ENCODE measurements at regions of chr17 and their contacts with region 1.

Region 1: DNA sequence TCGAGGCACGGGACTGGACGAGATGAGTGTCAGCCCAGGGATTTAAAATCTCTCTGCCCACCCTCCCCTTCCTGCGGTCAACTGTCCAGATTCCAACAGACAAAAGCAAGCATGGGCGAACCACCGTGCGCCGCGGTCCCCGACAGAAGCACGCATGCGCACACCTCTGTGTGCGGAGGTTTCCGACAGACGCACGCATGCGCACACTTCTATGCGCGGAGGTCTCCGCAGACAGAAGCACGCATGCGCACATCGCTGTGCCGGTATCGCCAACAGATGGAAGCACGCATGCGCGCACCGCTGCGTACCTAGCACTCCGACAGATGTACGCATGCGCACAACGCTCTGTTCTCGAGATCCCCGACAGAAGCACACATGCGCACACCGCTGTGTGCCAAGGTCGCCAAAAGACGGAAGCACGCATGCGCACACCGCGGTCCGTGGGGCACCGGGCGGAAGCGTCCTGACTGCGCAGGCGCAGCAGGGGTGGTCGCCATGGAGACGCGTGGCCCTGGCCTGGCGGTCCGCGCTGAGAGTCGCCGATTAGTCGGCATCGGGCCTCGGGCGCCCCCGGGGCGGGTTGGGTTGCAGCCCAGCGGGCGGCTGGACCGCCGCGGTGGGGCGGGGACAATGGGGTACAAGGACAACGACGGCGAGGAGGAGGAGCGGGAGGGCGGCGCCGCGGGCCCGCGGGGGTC is 57.4 kb upstream of the RPH3AL start:
- DNase-seq: peak; percentile 98
- H3K4me3 ChIP-seq: peak overlapping the region; percentile 82
- H3K27ac ChIP-seq: peak overlapping the region; percentile 75
- H3K27me3 ChIP-seq: no peaks in the 10 kb centered on the region
- CTCF ChIP-seq: no peak

Region 2: DNA sequence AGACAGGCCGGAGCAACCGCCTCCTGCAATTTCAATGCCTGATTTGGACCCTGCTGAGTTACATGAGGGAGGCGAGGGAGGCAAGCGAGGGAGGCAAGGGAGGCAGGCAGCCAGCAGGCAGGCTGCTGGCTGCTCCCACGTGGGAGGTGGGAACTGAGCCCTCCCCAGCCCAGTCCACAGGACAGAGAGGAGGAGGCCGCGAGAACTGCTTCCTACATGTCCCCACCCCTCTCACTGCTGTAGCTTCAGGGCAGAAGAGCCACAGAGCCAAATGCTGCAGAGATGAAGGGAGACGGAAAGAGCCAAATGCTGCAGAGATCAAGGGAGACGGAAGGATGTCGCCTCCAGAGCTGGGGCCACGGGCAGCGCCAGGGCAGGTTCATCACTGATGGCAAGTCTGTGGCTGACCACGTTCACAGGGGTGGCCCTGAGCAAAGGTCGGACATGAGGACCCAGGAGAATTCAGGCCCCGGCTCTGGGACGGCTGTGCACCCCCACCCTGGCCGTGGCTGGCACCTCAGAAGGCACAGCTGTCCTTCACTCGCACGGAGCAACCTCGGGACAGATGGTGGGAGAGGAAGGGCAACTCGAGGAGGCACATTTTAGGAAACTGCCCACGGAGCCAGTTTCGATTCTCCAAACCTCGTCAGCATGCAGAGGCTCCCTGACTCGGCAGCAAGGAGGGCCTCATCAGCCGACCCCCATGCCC is 78.8 kb before region 1 on chr17:
- CTCF ChIA-PET with region 1: no interaction called
- POLR2A ChIA-PET with region 1: no interaction called
- DNase-seq: no peak
- H3K4me3 ChIP-seq: no peak overlapping the region
- H3K27ac ChIP-seq: no peak overlapping the region
- H3K27me3 ChIP-seq: peaks cover 39% of the 10 kb centered on the region
- CTCF ChIP-seq: no peak

Region 3: DNA sequence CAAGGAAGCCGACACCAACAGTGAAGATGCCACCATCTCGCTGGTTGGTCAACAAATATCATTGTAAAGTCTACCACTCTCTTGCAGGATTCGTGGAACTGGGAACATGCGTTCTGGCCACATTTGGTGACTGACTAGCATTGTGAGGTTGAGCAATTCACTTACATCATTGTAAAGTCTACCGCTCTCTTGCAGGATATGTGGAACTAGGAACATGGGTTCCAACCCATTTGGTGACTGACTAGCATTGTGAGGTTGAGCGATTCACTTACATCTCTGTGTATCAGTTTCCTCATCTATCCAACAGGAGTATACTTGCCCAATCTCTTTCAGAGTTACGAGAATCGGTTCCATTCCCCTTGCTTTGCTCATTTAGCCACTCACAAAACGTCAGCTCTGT is 14.8 kb before region 1 on chr17:
- CTCF ChIA-PET with region 1: no interaction called
- POLR2A ChIA-PET with region 1: no interaction called
- DNase-seq: no peak
- H3K4me3 ChIP-seq: no peak overlapping the region
- H3K27ac ChIP-seq: no peak overlapping the region
- H3K27me3 ChIP-seq: peaks cover 7% of the 10 kb centered on the region
- CTCF ChIP-seq: no peak

Region 4: GRCh38 chr17:422196-422930 is 12.4 kb after region 1 on chr17:
- CTCF ChIA-PET with region 1: interaction called, 40 read pairs
- POLR2A ChIA-PET with region 1: no interaction called
- DNase-seq: no peak
- H3K4me3 ChIP-seq: no peak overlapping the region
- H3K27ac ChIP-seq: no peak overlapping the region
- H3K27me3 ChIP-seq: no peaks in the 10 kb centered on the region
- CTCF ChIP-seq: no peak

Region 5: GRCh38 chr17:538181-538973 is 128.4 kb after region 1 on chr17:
- CTCF ChIA-PET with region 1: interaction called, 13 read pairs
- POLR2A ChIA-PET with region 1: no interaction called
- DNase-seq: peak; percentile 34
- H3K4me3 ChIP-seq: no peak overlapping the region
- H3K27ac ChIP-seq: peak overlapping the region; percentile 90
- H3K27me3 ChIP-seq: no peaks in the 10 kb centered on the region
- CTCF ChIP-seq: no peak

Region 6: DNA sequence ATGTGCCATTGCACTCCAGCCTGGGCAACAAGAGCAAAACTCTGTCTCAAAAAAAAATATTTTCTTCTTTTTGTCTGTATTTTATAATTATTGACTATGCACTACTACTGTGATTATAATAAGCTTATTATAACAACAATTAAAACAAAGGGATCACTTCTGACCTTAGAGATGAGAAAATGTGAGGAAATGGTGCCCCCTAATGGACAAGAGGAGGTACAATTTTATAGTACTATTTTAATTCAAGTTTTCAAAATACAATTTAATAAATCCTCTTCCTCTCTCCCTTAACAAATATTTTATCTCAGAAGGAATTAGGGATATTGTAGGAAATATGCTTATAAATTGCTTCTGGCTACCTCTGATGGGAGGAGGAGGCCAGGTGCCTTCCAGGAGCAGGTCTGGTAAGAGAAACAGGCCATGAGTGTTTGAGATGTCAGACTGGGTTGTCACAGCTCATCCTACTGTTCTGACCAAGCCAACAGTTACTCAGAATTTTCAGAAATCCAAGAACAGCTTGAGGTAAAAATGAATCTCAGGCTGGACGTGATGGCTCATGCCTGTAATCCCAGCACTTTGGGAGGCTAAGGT is 290.6 kb after region 1 on chr17:
- CTCF ChIA-PET with region 1: interaction called, 468 read pairs
- POLR2A ChIA-PET with region 1: interaction called, 9 read pairs
- DNase-seq: no peak
- H3K4me3 ChIP-seq: no peak overlapping the region
- H3K27ac ChIP-seq: no peak overlapping the region
- H3K27me3 ChIP-seq: no peaks in the 10 kb centered on the region
- CTCF ChIP-seq: peak; percentile 59

Region 7: GRCh38 chr17:996554-997344 is 586.8 kb after region 1 on chr17 and contains the start of gene TIMM22:
- CTCF ChIA-PET with region 1: interaction called, 16 read pairs
- POLR2A ChIA-PET with region 1: no interaction called
- DNase-seq: peak; percentile 94
- H3K4me3 ChIP-seq: peak within 1 kb of the TSS; percentile 100
- H3K27ac ChIP-seq: peak within 1 kb of the TSS; percentile 91
- H3K27me3 ChIP-seq: no peaks in the 10 kb centered on the region
- CTCF ChIP-seq: peak; percentile 85
- polyA plus RNA-seq, gene TIMM22: 17.7 and 18.1 TPM in 2 replicates

Measured in AG04450 (cell line).